IMR-90 (cell line): ENCODE measurements at regions of chr12 and their contacts with region 1.

Region 1: GRCh38 chr12:98559666-98560065 is 33.8 kb upstream of the SLC25A3 start:
- DNase-seq: no peak
- ATAC-seq: no peak
- H3K4me3 ChIP-seq: no peak overlapping the region
- H3K27ac ChIP-seq: no peak overlapping the region
- H3K4me1 ChIP-seq: no peaks in the 10 kb centered on the region
- H3K27me3 ChIP-seq: no peaks in the 10 kb centered on the region
- CTCF ChIP-seq: no peak
- POLR2A ChIP-seq: no peak
- RAD21 ChIP-seq: no peak

Region 2: GRCh38 chr12:97513918-97514317 is 1045.7 kb before region 1 on chr12:
- CTCF ChIA-PET with region 1: no interaction called
- POLR2A ChIA-PET with region 1: no interaction called
- dilution Hi-C with region 1: no loop called
- in situ Hi-C with region 1: no loop called
- intact Hi-C with region 1: loop called (anchors 5 kb)
- DNase-seq: no peak
- ATAC-seq: no peak
- H3K4me3 ChIP-seq: no peak overlapping the region
- H3K27ac ChIP-seq: no peak overlapping the region
- H3K4me1 ChIP-seq: no peaks in the 10 kb centered on the region
- H3K27me3 ChIP-seq: no peaks in the 10 kb centered on the region
- CTCF ChIP-seq: no peak
- POLR2A ChIP-seq: no peak
- RAD21 ChIP-seq: no peak

Region 3: DNA sequence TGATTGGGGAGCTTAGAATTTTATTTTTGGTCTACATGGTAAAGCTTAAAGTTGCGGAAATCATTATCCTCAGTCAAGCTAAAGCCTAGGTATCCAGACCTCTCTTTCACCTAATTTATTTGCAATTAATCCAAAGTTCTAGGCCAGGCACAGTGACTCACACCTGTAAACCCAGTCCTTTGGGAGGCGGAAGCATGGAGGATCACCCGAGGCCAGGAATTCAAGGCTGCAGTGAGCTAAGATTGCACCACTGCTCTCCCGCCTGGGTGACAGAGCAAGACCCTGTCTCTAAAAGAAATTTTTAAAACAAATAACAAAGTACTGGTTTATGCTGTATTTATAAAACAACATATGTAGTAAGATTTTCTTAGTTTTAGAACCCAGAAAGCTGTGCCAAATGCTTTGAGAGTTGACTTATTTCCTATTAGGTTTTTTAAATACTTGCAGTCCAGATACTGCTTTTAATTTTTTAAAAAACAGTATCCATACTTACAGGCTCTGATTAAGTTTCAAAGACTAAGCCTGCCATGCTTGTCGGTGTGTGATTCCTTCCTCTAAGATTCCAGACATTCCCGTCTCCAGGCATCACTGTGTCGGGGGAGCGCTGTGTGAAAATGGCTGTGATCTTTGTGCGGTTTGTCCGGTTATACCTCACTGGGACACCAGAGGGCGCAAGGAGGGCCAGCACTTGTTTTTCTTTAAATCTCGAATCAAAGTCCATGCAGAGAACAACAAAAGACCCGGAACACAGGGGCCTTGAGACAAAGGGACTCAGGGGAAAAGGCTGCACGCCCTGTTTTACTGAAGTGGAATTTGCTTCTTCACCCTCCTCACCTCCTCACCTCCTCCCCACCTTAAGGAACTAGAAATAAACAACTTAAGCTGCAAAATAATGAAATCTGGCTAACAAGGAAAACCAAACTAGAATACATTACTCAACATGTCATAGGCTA is 68.9 kb before region 1 on chr12:
- CTCF ChIA-PET with region 1: no interaction called
- POLR2A ChIA-PET with region 1: no interaction called
- dilution Hi-C with region 1: no loop called
- in situ Hi-C with region 1: no loop called
- intact Hi-C with region 1: no loop called
- DNase-seq: peak; percentile 90
- ATAC-seq: peak; percentile 100
- H3K4me3 ChIP-seq: no peak overlapping the region
- H3K27ac ChIP-seq: peak overlapping the region; percentile 87
- H3K4me1 ChIP-seq: no peaks in the 10 kb centered on the region
- H3K27me3 ChIP-seq: no peaks in the 10 kb centered on the region
- CTCF ChIP-seq: peak; percentile 93
- POLR2A ChIP-seq: no peak
- RAD21 ChIP-seq: peak; percentile 68

Region 4: DNA sequence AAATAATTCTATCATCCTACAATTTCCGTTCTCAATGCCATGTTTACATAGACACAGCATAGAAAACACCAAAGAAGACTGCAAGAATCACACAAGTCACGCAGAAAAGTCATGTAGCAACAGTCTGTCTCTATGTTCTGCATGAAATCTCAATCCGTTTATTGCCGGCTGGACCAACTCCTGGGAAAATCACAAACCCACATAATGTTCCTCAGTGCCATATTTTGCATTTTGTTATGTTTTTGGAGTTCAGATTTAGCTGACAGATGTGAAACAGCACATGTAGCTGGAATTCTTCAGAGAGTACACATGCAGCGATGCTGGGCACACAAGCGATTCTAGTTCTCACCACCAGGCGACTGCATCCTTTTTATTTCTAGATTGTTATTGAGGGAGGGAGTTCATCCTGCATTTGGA is 278.6 kb after region 1 on chr12:
- CTCF ChIA-PET with region 1: no interaction called
- POLR2A ChIA-PET with region 1: no interaction called
- dilution Hi-C with region 1: no loop called
- in situ Hi-C with region 1: no loop called
- intact Hi-C with region 1: no loop called
- DNase-seq: peak; percentile 2
- ATAC-seq: peak; percentile 42
- H3K4me3 ChIP-seq: no peak overlapping the region
- H3K27ac ChIP-seq: no peak overlapping the region
- H3K4me1 ChIP-seq: 0 out of 2 replicates have a peak, but pooled peaks cover 1% of the 10 kb centered on the region
- H3K27me3 ChIP-seq: no peaks in the 10 kb centered on the region
- CTCF ChIP-seq: peak; percentile 23; the same call in 1 of the 2 replicates
- POLR2A ChIP-seq: no peak
- RAD21 ChIP-seq: no peak

Region 5: DNA sequence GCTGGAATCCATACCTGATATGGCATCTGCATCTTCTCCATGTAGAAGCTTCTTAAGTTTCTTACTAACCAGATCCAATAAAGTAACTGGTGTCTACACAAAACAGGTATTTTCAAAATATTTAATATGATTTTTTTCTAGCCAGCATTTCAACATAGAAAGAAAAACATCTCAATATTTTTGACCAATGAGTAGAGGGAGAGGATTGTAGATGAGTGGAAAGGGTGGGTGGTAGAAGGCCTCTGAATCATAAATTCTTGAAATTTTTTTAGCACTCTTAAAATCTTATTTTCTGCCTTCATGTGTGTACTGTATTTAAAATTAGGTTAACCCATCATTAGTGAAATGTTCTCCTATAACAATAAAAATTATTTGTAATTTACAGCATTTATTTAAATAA is 1689.2 kb after region 1 on chr12:
- CTCF ChIA-PET with region 1: no interaction called
- POLR2A ChIA-PET with region 1: no interaction called
- dilution Hi-C with region 1: no loop called
- in situ Hi-C with region 1: no loop called
- intact Hi-C with region 1: loop called (anchors 10 kb)
- DNase-seq: peak; percentile 45
- ATAC-seq: peak; percentile 81
- H3K4me3 ChIP-seq: no peak overlapping the region
- H3K27ac ChIP-seq: no peak overlapping the region
- H3K4me1 ChIP-seq: no peaks in the 10 kb centered on the region
- H3K27me3 ChIP-seq: no peaks in the 10 kb centered on the region
- CTCF ChIP-seq: no peak
- POLR2A ChIP-seq: no peak
- RAD21 ChIP-seq: no peak